Motor neuron (in vitro differentiated cells): ENCODE measurements at regions of chr1 and their contacts with region 1.

Region 1: GRCh38 chr1:21963477-21964217 is 13.2 kb upstream of the CELA3B start:
- ATAC-seq: peak; percentile 82 to 95 (median 88)
- H3K4me3 ChIP-seq: no peak overlapping the region
- H3K27ac ChIP-seq: no peak overlapping the region
- H3K4me1 ChIP-seq: no peaks in the 10 kb centered on the region

Region 2: DNA sequence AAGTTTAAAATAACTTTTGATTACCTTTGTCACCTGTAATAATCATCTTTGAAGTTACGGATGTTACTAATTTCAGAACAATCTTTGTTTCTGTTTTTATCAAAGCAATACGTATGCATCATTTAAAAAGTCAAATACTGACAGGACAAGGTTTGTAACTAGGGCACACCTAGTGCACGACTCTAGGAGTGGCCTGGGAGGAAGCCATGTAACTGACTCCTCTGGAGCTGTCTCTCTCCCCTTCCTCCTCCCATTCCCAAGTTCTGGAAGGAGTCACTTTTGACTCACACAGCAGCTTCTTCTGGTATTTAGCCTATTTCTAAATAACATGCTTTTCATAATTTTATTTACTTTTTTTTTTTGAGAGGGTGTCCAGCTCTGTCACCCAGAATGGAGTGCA is 282.7 kb before region 1 on chr1:
- in situ Hi-C with region 1: loop called in 1 of 9 experiments (anchors 25 kb)
- ATAC-seq: peak in 1 of 8 experiments; percentile 45
- H3K4me3 ChIP-seq: no peak overlapping the region
- H3K27ac ChIP-seq: no peak overlapping the region
- H3K4me1 ChIP-seq: peaks cover 22 to 37% of the 10 kb centered on the region in 2 donors

Region 3: DNA sequence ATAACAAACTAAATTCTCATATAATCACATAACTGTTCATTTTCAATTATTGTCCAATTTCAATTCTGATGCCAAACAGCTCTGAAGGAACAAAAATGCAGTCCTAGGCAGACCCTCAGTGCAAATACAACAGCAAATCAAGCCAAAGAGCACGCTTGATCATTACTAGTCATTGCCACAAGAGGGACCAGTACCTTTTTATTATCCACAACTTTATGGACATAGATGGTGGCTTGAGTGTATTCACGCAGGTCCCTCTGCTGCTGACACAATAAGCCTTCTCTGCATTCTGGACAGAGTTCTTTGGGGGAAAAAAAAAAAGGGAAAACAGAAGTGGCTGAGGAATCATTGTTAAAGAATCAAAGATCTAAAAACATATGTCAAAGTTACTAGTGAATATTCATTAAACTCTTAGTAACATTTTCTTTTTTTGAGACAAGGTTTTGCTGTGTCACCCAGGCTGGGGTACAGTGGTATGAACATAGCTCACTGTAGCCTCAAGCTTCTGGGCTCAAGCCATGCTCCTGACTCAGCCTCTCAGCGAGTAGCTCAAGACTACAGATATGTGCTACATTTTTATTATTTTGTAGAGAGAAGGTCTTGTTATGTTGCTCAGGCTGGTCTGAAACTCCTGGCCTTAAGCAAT is 260.2 kb before region 1 on chr1:
- in situ Hi-C with region 1: loop called in 2 of 9 experiments (anchors 25 kb)
- ATAC-seq: peak; percentile 53 to 89 (median 64)
- H3K4me3 ChIP-seq: no peak overlapping the region
- H3K27ac ChIP-seq: no peak overlapping the region
- H3K4me1 ChIP-seq: peaks cover 23 to 24% of the 10 kb centered on the region in 2 donors

Region 4: GRCh38 chr1:21834094-21834493 is 129.6 kb before region 1 on chr1:
- in situ Hi-C with region 1: no loop called
- ATAC-seq: peak in 2 of 8 experiments; percentile 47 to 54
- H3K4me3 ChIP-seq: no peak overlapping the region
- H3K27ac ChIP-seq: no peak overlapping the region
- H3K4me1 ChIP-seq: no peaks in the 10 kb centered on the region